Esophagus muscularis mucosa (tissue), 4 donors: ENCODE measurements at regions of chr19 and their contacts with region 1.

Region 1: GRCh38 chr19:21767065-21767800 is at the start of gene ZNF100:
- DNase-seq: peak; percentile 96
- H3K4me3 ChIP-seq: peak within 1 kb of the TSS; percentile 67 to 90 (median 70)
- H3K27ac ChIP-seq: peak within 1 kb of the TSS; percentile 79 to 92 (median 86)
- H3K4me1 ChIP-seq: peaks cover 4 to 21% (median 14%) of the 10 kb centered on the region in 4 donors
- H3K27me3 ChIP-seq: no peaks in the 10 kb centered on the region
- CTCF ChIP-seq: no peak
- EP300 ChIP-seq: no peak
- POLR2A ChIP-seq: no peak
- total RNA-seq, gene ZNF100: 2.8 to 5.8 (median 4.0) TPM

Region 2: DNA sequence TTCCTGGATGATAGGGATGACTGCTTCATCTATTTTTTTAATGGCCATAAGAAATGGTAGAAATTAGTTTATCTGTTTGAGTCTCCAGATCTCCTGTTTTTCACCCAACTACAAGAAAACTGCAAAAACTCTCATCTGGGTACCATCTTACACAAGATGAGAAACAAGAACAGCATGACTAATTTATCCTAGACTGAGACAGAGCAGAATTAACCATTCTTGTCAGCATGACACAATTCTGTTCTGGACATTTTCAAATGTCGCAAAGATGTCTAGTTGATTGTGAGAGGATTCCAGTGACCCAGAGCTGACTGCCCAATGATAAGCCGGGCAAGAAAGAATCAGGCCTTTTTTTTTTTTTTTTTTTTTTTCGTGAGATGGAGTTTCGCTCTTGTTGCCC is 56.0 kb after region 1 on chr19:
- intact Hi-C with region 1: no loop called
- DNase-seq: no peak
- H3K4me3 ChIP-seq: no peak overlapping the region
- H3K27ac ChIP-seq: no peak overlapping the region
- H3K4me1 ChIP-seq: peaks cover 0 to 33% (median 27%) of the 10 kb centered on the region in 4 donors
- H3K27me3 ChIP-seq: no peaks in the 10 kb centered on the region
- CTCF ChIP-seq: no peak
- EP300 ChIP-seq: no peak
- POLR2A ChIP-seq: no peak

Region 3: GRCh38 chr19:21833733-21834132 is 66.5 kb after region 1 on chr19:
- intact Hi-C with region 1: loop called (anchors 5 kb)
- DNase-seq: no peak
- H3K4me3 ChIP-seq: no peak overlapping the region
- H3K27ac ChIP-seq: no peak overlapping the region
- H3K4me1 ChIP-seq: peaks cover 6 to 21% (median 10%) of the 10 kb centered on the region in 4 donors
- H3K27me3 ChIP-seq: no peaks in the 10 kb centered on the region
- CTCF ChIP-seq: no peak
- EP300 ChIP-seq: no peak
- POLR2A ChIP-seq: no peak

Region 4: DNA sequence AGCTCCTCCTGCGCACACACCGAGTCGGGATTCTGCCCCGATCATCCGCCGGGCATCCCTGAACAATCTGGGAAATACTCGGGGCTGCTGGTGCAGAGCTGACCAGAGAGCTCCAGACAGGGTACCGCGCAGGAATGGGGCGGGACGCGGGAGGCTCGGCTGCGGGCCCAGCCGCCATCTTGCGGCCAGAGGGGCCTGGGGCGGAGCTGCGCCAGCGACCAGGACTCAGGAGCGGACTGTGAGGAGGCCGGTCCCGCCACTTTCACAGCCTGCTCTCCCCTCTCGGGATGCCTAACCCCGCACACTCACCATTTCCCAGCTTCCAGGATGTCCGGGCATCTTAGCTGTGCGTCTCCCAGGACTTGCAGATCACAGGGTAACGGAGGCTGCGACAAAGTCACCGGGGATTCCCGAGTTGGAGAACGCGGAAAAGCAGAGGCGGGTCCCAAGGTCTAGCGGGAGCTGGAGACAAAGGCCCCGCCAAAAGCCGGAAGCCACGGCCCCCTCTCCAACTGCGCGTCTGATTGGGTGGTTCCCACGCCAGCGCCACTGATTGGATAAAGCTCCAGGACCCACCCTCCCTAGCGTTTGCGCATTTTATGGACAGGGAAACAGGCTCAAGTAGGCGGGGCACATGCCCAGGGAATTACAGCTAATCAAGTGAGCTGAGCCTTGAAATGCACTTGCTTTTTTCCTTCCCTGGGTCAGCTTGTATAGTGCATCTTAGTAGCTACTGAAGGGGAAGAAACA is 84.5 kb after region 1 on chr19:
- intact Hi-C with region 1: loop called (anchors 10 kb)
- DNase-seq: peak; percentile 98
- H3K4me3 ChIP-seq: peak overlapping the region; percentile 77 to 88 (median 85)
- H3K27ac ChIP-seq: peak overlapping the region; percentile 83 to 93 (median 88)
- H3K4me1 ChIP-seq: peaks cover 10 to 22% (median 16%) of the 10 kb centered on the region in 4 donors
- H3K27me3 ChIP-seq: peaks cover 0 to under 1% (median 0%) of the 10 kb centered on the region in 4 donors
- CTCF ChIP-seq: peak in 1 of 3 experiments; percentile 18
- EP300 ChIP-seq: no peak
- POLR2A ChIP-seq: no peak